A673 (cell line): ENCODE measurements at regions of chrX and their contacts with region 1.

Region 1: GRCh38 chrX:71178908-71179307 is 34.3 kb downstream of the NLGN3 start:
- DNase-seq: peak; percentile 76
- H3K4me3 ChIP-seq: no peak overlapping the region
- H3K27ac ChIP-seq: no peak overlapping the region
- H3K4me1 ChIP-seq: peaks cover 8% of the 10 kb centered on the region
- H3K27me3 ChIP-seq: no peaks in the 10 kb centered on the region
- CTCF ChIP-seq: peak; percentile 76

Region 2: GRCh38 chrX:70769659-70770232 is 409.2 kb before region 1 on chrX:
- CTCF ChIA-PET with region 1: no interaction called
- POLR2A ChIA-PET with region 1: no interaction called
- intact Hi-C with region 1: loop called (anchors 1 kb)
- DNase-seq: peak; percentile 12
- H3K4me3 ChIP-seq: no peak overlapping the region
- H3K27ac ChIP-seq: no peak overlapping the region
- H3K4me1 ChIP-seq: no peaks in the 10 kb centered on the region
- H3K27me3 ChIP-seq: no peaks in the 10 kb centered on the region
- CTCF ChIP-seq: peak; percentile 57

Region 3: GRCh38 chrX:70970482-70970995 is 208.4 kb before region 1 on chrX:
- CTCF ChIA-PET with region 1: no interaction called
- POLR2A ChIA-PET with region 1: no interaction called
- intact Hi-C with region 1: loop called (anchors 1 kb)
- DNase-seq: peak; percentile 34
- H3K4me3 ChIP-seq: peak overlapping the region; percentile 1
- H3K27ac ChIP-seq: no peak overlapping the region
- H3K4me1 ChIP-seq: no peaks in the 10 kb centered on the region
- H3K27me3 ChIP-seq: no peaks in the 10 kb centered on the region
- CTCF ChIP-seq: peak; percentile 51

Region 4: DNA sequence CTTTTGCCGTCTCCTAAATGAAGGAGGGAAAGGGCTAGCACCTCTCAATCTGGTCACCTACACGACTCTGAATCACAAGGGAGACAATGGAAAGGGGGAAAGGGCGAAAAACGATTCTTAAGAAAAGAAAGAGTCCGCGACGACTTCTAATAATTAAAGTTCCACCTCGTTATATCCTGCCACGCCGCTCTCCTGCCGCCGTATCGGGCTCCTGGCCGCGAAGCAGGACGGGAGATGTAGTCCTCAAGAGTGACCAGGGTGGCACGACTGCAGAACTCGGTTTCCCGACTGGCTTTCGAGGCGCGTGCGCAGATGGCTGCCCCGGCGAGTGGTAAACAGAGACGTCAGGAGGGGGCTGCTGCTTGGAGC is 83.4 kb before region 1 on chrX and contains the start of gene FOXO4:
- CTCF ChIA-PET with region 1: no interaction called
- POLR2A ChIA-PET with region 1: no interaction called
- intact Hi-C with region 1: loop called (anchors 5 kb)
- DNase-seq: peak; percentile 88
- H3K4me3 ChIP-seq: peak within 1 kb of the TSS; percentile 51
- H3K27ac ChIP-seq: no peak within 1 kb of the TSS
- H3K4me1 ChIP-seq: no peaks in the 10 kb centered on the region
- H3K27me3 ChIP-seq: no peaks in the 10 kb centered on the region
- CTCF ChIP-seq: no peak
- total RNA-seq, gene FOXO4: 7.0 and 10.8 TPM in 2 replicates

Region 5: GRCh38 chrX:71106455-71106854 is 72.5 kb before region 1 on chrX and contains the start of gene CXorf65:
- CTCF ChIA-PET with region 1: no interaction called
- POLR2A ChIA-PET with region 1: no interaction called
- intact Hi-C with region 1: no loop called
- DNase-seq: no peak
- H3K4me3 ChIP-seq: no peak within 1 kb of the TSS
- H3K27ac ChIP-seq: no peak within 1 kb of the TSS
- H3K4me1 ChIP-seq: peaks cover 11% of the 10 kb centered on the region
- H3K27me3 ChIP-seq: no peaks in the 10 kb centered on the region
- CTCF ChIP-seq: no peak
- total RNA-seq, gene CXorf65: not detected in 2 replicates